ENCODE measurements at regions of chr2 and their contacts with region 1.

Region 1: DNA sequence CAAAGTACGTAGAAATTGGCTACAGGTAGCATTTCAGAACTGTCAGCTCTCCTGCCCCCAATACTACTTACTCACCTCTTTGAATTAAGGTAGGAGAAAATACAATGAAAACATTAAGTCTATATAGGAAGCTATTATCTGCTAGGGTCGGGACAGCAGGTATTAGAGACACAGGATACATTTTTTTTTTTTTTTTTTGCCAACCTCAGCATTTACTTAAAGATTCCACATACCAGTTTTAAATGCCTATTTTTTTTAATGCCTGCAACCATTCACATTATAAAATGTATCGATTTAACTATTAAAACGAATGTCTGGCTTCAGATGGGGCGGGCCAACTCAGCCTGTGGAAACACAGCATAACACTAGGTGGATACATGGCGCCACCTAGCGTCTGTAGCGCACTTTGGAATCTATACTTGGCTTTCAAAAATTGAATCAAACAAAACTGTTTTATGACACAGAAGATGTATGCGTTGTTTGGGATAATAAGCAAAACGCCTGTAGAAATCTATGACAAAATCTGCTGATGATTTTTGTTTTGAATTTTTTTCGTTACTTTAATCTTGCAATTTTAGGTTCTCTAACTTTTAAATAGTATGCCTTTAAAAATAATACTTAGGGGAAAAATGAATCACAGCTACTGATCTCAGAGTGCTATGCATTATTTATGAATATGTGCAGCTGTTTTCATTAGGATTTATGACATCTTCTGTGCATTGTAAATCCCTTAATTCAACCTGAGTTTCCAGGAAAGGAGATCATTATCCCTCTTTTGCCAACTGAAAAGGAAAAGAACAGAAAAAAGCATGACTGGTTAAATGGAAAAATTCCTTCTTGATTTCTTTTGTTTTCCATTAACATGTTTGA is 261.0 kb downstream of the NYAP2 start:
- DNase-seq: peak; percentile 75
- H3K4me3 ChIP-seq: no peak overlapping the region
- H3K27ac ChIP-seq: no peak overlapping the region
- H3K4me1 ChIP-seq: no peaks in the 10 kb centered on the region
- CTCF ChIP-seq: peak; percentile 98

Region 2: DNA sequence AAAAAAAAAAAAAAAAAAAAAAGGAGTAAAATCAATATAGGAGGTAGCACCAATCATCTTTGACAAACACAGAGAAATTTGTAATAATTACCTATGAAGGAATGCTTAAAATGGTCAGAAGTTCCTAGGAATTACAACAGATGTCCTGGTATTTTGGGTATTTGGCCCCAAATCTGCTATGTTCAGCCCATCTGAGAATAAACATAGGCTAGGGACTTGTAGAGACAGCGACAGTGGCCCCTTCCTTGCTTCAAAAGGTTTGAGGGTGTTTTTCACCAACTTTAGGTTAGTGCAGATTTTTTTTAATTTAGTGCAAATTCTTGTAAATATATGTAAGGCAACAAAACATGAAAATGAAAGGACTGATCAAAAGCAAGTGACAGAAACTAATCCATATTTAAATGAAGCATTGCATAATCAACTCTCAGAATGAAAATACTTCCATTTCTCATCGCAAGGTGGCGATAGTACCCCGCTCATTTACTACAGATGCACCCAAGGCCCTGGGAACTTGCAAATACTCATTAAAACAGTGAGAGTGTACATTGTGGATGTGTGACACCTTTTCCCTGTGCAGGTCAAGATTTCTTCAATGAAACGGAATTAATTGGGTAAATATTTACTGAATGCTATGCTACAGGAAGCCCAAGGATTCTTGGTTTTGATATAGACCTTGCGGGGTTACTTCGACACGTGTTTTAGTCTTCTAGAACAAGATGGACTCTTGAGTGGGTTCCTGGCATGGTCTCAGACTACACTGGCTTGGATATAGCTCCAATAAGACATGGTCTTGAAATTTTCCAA is 1303.2 kb before region 1 on chr2:
- CTCF ChIA-PET with region 1: no interaction called
- POLR2A ChIA-PET with region 1: no interaction called
- intact Hi-C with region 1: loop called (anchors 2 kb)
- DNase-seq: peak; percentile 75
- H3K4me3 ChIP-seq: no peak overlapping the region
- H3K27ac ChIP-seq: no peak overlapping the region
- H3K4me1 ChIP-seq: peaks cover 8% of the 10 kb centered on the region
- CTCF ChIP-seq: peak; percentile 93

Region 3: DNA sequence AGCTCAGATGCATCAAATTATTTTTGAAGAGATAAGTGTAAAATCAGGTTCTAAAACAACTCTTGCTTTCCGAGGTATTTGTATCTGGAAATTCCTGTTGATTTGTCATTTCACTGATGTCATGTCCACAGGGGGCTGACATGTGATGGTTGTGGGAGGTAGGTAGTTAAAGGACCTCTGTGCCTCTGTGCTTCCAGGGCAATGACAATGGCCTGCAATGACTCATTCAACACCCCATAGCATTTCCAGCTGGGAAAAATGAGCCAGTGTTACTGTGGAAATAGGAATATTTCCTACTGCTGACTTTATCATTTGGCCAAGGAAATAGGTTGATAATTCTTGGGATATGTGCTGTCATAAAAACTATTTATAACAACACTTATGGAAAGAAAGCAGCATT is 858.1 kb before region 1 on chr2:
- CTCF ChIA-PET with region 1: no interaction called
- POLR2A ChIA-PET with region 1: no interaction called
- intact Hi-C with region 1: loop called (anchors 10 kb)
- DNase-seq: no peak
- H3K4me3 ChIP-seq: no peak overlapping the region
- H3K27ac ChIP-seq: no peak overlapping the region
- H3K4me1 ChIP-seq: no peaks in the 10 kb centered on the region
- CTCF ChIP-seq: no peak

Region 4: DNA sequence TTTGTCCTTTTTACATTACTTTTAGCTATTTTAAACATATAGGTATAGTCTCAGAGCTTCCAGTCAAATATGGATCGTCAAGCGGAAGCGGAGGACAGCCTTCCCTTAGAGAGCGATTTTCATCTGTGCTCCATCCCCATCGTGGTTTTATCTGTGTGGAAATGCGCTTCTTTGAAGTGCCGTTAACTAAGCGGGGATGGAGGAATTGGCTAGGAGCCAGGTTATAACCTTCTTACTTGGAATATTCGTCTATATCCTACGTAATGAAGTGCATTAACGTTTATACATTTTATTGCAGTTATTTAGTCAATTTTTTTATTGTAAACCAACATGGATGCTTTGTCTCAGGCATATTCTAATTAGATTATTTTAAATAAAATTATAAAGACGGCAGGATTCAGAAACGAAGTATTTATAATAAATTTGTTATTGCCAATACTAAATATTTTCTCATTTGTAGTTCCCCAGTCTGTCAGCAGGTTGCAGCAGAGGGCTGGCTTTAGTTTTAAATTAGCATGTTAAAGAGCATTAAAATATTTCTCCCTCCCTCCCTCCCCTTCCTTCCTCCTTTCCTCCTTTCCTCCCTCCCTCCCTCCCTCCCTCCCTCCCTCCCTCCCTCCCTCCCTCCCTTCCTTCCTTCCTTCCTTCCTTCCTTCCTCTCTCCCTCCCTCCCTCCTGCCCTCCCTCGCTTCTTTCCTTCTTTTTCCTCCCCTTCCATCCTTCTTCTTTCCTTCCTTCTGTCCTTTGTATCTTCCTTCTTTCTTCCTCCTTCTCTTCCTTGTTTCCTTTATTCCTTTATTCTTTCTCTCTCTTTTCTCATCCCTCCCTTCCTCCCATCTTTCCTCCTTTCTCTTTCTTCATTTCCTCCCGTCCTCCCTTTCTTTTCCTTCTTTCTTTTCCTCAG is 537.7 kb before region 1 on chr2:
- CTCF ChIA-PET with region 1: interaction called, 3 read pairs
- POLR2A ChIA-PET with region 1: no interaction called
- intact Hi-C with region 1: loop called (anchors 1 kb)
- DNase-seq: peak; percentile 44
- H3K4me3 ChIP-seq: no peak overlapping the region
- H3K27ac ChIP-seq: no peak overlapping the region
- H3K4me1 ChIP-seq: no peaks in the 10 kb centered on the region
- CTCF ChIP-seq: peak; percentile 74

Region 5: DNA sequence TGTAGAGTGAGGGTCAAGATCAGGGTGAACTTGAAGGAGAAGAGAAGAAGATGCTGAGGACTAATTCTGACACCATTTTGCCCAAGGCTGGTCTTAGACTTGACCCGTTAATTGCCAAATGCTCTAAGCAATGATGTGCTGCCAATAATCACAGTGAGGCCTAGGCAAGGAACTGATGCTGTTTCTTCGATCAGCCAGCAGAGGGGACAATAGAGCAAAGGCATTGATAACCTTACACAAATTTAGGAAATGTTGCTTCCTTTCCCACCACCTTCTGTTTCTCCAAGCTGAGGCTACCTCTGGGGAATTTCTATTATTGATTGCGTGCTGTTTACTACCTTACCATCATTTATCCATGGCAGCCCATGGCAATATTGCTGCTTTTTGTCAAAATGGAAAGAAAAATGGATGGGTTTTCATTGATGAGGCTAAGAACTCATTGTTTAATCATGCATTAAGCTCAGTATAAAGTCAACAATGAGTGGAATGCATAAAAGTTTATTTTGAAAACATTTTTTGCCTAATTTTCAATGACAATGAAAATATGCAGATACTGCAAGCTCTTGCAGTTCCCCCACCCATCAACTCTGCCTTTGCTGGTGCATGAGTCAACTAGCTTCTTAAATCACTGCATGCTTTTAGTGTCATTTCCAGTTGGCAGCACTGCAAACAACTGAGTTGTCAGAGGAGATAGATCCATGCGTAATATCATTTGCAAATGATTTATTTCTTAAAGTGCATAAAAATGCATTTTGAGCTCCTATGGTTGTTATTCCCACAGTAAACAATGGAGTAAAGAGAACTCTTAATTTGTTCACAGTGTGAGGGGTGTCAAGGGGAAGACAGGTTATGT is 377.4 kb before region 1 on chr2:
- CTCF ChIA-PET with region 1: no interaction called
- POLR2A ChIA-PET with region 1: no interaction called
- intact Hi-C with region 1: loop called (anchors 5 kb)
- DNase-seq: peak; percentile 41
- H3K4me3 ChIP-seq: no peak overlapping the region
- H3K27ac ChIP-seq: no peak overlapping the region
- H3K4me1 ChIP-seq: peaks cover 13% of the 10 kb centered on the region
- CTCF ChIP-seq: peak; percentile 83

Region 6: DNA sequence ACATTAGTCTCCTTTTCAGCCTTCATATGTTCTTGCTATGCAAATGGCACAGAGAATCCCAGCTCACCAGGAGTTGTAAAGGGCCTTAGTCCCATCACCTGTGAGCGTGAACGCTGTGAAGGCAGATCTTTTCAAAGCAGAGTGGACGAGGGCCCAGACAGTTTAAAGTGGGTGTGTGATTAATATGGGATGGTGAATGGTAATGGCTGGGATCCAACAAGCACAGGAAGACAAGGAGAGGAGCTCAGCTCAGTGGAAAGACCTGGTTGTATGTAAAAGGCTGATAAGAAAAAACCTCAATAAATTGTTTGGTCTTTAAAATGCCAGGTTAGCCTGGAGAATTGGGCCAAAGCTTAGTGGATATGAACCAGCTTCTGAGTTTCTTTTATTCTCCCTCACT is 65.2 kb after region 1 on chr2:
- CTCF ChIA-PET with region 1: no interaction called
- POLR2A ChIA-PET with region 1: no interaction called
- intact Hi-C with region 1: no loop called
- DNase-seq: no peak
- H3K4me3 ChIP-seq: no peak overlapping the region
- H3K27ac ChIP-seq: no peak overlapping the region
- H3K4me1 ChIP-seq: no peaks in the 10 kb centered on the region
- CTCF ChIP-seq: no peak

Region 7: DNA sequence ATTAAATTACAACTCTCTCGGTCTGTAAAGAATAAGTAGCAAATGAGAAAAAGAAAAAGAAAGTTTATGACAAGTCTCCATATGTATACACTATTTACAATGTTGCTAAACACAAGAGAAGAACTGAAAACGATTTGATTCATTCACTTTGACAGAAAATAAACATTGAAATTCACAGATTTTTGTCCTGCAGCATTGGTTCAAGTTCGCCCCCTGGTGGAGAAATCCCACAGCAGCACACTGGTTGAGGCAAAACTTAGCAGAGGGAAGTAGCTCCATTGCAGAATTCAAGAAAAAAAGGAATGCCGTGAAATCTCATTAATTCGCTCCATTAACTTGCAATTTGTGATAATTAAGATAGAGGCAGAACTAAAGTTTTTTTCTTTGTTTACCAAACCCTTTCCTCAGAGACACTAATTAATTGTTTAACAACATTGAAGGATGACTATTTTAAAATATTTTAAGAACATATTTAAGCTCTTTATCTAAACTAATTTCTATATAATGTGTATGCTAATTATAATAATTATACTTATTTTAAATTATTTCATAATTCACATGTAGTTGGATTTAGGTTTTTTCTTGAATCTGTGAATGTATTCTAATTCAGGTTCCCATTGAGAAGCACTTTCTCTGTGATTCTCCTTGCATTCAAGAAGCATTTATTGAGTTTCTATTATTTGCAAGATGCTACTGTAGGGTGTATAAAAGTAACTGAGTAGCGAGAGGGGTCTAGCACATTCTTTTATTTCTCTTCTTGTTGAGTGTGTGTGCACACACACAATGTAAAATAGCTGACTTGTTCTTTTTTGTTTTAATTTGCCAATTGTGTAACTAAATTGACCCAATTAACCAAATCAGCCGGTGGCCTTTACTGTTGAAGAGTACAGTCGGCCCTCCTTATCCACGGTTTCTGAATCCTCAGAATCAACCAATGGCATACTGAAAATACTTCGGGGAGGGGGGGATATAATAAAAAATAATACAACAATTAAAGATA is 1578.0 kb after region 1 on chr2:
- CTCF ChIA-PET with region 1: no interaction called
- POLR2A ChIA-PET with region 1: no interaction called
- intact Hi-C with region 1: loop called (anchors 10 kb)
- DNase-seq: peak; percentile 56
- H3K4me3 ChIP-seq: no peak overlapping the region
- H3K27ac ChIP-seq: no peak overlapping the region
- H3K4me1 ChIP-seq: no peaks in the 10 kb centered on the region
- CTCF ChIP-seq: peak; percentile 99

Measured in OCI-LY7 (cell line).